ENCODE measurements at regions of chr6 and their contacts with region 1.

Region 1: GRCh38 chr6:18327626-18328025 is 59.5 kb upstream of the RNF144B start:
- DNase-seq: no peak
- H3K4me3 ChIP-seq: no peak overlapping the region
- H3K27ac ChIP-seq: peak overlapping the region in 3 of 4 donors; percentile 14 to 64 (median 48)
- H3K4me1 ChIP-seq: peaks cover 0 to 25% (median 4%) of the 10 kb centered on the region in 3 donors
- H3K27me3 ChIP-seq: no peaks in the 10 kb centered on the region
- CTCF ChIP-seq: no peak
- POLR2A ChIP-seq: peak in 1 of 4 donors; percentile 20

Region 2: GRCh38 chr6:18503593-18504231 is 176.1 kb after region 1 on chr6:
- intact Hi-C with region 1: loop called (anchors 5 kb)
- DNase-seq: no peak
- H3K4me3 ChIP-seq: peak overlapping the region; percentile 16 to 61 (median 32)
- H3K27ac ChIP-seq: peak overlapping the region; percentile 34 to 67 (median 49)
- H3K4me1 ChIP-seq: peaks cover 4 to 19% (median 8%) of the 10 kb centered on the region in 3 donors
- H3K27me3 ChIP-seq: no peaks in the 10 kb centered on the region
- CTCF ChIP-seq: peak; percentile 73 to 94 (median 86)
- POLR2A ChIP-seq: no peak